ENCODE measurements at regions of chr13 and their contacts with region 1.

Region 1: GRCh38 chr13:114065141-114065925 is 67.1 kb downstream of the RASA3 start:
- DNase-seq: peak; percentile 52 to 95 (median 80)

Region 2: GRCh38 chr13:114004420-114005205 is 60.7 kb before region 1 on chr13:
- intact Hi-C with region 1: no loop called
- DNase-seq: peak in 3 of 42 donors; percentile 1 to 29 (median 17)

Region 3: GRCh38 chr13:114132419-114133121 is 67.2 kb after region 1 on chr13 and contains the start of gene RASA3:
- intact Hi-C with region 1: loop called (anchors 5 kb)
- DNase-seq: peak in 40 of 42 donors; percentile 46 to 88 (median 76)

Region 4: DNA sequence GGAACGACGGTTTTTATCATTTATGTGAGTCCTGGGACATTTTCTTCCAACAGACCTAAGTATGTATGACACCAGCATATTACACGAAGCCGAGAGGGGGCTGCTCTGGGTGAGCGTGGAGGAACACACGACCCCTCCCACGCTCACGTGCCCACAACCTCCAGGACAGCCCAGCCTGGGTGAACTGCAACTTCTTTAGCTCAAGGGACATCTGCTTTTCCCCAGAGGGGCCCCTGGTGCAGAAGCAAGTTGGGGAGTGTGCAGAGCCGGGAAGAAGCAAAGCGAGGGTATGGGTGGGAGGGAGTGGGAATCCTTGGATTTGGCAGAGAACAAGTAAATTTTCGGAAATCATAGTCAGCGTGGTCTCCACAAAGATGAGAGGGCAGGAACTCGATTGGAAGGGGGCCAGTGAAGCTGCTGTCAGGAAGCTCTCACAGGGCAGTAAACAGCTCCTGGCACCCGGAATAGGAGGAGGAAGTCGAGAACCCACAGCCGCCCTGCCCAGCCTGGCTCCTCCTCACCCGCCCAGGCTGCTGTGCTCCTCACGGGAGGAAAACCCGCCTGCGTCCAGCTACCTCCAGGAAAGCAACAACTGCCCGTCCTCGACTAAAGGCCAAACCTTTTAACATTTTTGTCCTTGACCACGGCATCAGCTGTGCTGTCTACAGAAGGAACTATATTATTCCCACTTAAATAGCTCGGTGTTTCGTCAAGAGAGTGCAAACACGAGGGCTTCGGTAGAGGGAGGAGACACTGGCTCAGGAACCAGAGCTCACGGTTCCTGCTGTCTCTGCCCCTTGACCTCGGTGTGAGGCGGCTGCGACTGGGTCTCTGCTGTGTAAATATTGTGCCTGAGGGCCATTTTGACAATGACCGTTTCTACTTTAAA is 96.6 kb after region 1 on chr13:
- intact Hi-C with region 1: loop called (anchors 10 kb)
- DNase-seq: peak in 26 of 42 donors; percentile 20 to 64 (median 40)